HEK293 (cell line): ENCODE measurements at regions of chr17 and their contacts with region 1.

Region 1: DNA sequence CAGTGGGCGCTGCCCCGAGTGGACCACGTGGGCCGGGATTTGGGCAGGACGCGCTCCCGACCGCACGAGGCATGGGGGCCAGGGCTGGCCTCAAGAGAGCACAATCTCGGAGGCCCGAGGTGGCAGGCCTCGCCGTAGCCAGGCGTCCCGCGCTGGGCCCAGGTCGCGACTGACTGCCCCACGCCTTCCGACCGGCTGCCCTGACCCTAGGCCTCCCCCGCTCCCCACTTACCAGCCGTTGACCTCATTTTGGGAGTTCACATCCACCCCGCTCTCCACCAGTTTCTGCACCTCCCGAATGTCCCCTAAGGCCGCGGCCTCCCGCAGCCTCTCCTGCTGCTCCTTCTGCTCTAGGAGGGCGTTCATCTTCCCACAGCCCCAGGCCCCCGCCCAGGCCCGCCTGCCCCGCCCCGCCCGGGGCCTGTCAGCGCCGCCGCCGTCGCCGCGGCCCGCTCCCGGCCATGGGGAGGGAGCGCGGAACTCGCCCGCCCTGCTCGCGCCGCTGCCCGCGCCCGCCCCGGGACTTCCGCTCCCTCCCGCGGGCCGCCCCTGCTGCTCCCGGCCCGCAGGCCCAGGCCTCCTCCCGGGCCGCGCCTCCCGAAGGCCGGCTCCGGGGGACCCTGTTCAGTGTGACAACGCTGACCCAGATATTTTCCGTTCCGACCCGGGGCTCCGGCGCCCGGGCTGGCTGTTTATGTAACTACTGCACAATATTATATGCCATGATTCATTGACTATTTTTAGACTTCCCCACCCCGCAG is at the start of gene ANKRD40:
- H3K4me3 ChIP-seq: peak within 1 kb of the TSS; percentile 89
- H3K27ac ChIP-seq: peak within 1 kb of the TSS; percentile 99
- H3K4me1 ChIP-seq: peaks cover 9% of the 10 kb centered on the region
- CTCF ChIP-seq: peak; percentile 28; the same call in 1 of the 2 replicates

Region 2: DNA sequence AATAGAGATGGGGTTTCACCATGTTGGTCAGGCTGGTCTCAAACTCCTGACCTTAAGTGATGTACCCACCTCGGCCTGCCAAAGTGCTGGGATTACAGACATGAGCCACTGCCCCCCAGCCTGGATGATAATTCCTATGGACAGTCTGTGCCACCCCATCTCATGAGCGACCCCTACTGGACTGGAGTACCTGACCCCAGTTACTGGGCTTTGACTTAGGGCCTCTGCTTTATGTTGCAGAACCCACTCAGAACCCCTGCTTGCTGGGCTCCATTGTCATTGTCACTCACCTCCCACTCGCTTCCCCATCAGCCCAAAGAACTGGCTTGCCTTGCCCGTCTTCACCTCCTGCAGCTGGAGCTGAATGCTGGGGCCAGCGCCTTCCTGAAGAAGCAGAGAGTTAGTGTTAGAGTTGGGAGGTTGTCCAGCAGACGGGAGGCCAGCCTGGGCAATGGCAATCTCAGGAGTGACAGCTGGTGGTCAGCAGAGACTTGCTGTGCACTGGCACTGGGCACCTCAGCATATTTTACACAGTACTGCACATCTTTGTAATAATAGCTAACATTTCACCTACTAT is 863.6 kb before region 1 on chr17:
- CTCF ChIA-PET with region 1: no interaction called
- POLR2A ChIA-PET with region 1: no interaction called
- H3K4me3 ChIP-seq: no peak overlapping the region
- H3K27ac ChIP-seq: no peak overlapping the region
- H3K4me1 ChIP-seq: no peaks in the 10 kb centered on the region
- CTCF ChIP-seq: peak; percentile 34; the same call in 1 of the 2 replicates

Region 3: GRCh38 chr17:50686494-50687199 is 20.8 kb before region 1 on chr17:
- CTCF ChIA-PET with region 1: interaction called, 4 read pairs
- POLR2A ChIA-PET with region 1: interaction called, 13 read pairs
- H3K4me3 ChIP-seq: no peak overlapping the region
- H3K27ac ChIP-seq: no peak overlapping the region
- H3K4me1 ChIP-seq: peaks cover 6% of the 10 kb centered on the region; the same call in 1 of the 2 replicates
- CTCF ChIP-seq: no peak

Region 4: GRCh38 chr17:50691545-50692447 is 15.7 kb before region 1 on chr17:
- CTCF ChIA-PET with region 1: interaction called, 12 read pairs
- POLR2A ChIA-PET with region 1: interaction called, 13 read pairs
- H3K4me3 ChIP-seq: no peak overlapping the region
- H3K27ac ChIP-seq: no peak overlapping the region
- H3K4me1 ChIP-seq: peaks cover 4% of the 10 kb centered on the region; the same call in 1 of the 2 replicates
- CTCF ChIP-seq: no peak

Region 5: GRCh38 chr17:50719144-50719923 is 11.9 kb after region 1 on chr17 and contains the start of gene LUC7L3:
- CTCF ChIA-PET with region 1: interaction called, 3 read pairs
- POLR2A ChIA-PET with region 1: interaction called, 46 read pairs
- H3K4me3 ChIP-seq: peak within 1 kb of the TSS; percentile 98
- H3K27ac ChIP-seq: peak within 1 kb of the TSS; percentile 97
- H3K4me1 ChIP-seq: peaks cover 22% of the 10 kb centered on the region
- CTCF ChIP-seq: 0 out of 2 replicates have a peak, but pooled peaks have one; percentile 9